Activated naive CD4-positive, alpha-beta T cell treated with anti-CD3 and anti-CD28 coated beads for 36 hours (primary cell): ENCODE measurements at regions of chrX and their contacts with region 1.

Region 1: DNA sequence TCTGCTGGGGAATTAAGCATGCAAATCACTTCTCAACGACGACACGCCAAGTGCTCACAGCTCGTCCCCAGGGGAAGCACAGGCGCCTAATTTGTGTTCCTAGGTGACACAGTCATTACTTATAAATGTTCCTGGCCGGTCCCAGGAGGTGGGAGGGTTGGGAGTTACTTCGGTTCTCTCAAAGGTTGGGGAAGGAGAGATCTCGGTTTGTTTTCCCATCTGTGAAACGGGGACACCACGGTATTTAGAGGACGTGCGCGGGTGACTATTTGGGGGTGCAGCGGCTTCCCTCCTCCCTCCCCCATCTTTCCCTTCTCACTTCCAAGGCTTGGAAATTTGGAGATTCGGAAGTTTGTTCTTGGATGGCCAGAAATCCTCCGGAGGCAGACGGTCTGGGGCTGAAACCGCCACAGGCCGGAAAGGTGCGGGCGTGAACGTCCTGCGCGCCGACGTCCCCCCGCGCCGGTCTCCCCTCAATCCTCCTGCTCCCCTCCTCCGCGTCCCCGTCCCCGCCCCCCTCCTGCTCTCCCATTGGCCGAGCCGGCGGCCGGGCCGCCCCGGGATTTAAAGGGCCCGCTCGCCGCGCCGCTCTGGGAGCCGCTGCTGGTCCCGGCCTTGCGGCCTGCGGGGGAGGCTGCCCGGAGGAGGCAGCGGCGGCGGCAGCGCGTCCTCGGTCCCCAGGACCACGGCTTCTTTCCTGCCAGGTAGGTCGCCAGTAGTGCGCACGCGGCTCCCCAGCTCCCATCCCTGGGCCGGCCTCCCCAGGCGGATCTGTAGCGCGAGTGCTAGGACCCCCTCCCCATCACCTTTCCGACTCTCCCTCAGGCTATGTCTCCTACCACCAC is at the start of gene PORCN:
- DNase-seq: peak; percentile 77
- H3K4me3 Mint-ChIP-seq: peak within 1 kb of the TSS; percentile 78
- H3K27ac Mint-ChIP-seq: peak within 1 kb of the TSS; percentile 66
- H3K4me1 Mint-ChIP-seq: peaks cover 13% of the 10 kb centered on the region
- H3K27me3 Mint-ChIP-seq: no peaks in the 10 kb centered on the region
- total RNA-seq, gene PORCN: 5.2 to 5.6 TPM

Region 2: DNA sequence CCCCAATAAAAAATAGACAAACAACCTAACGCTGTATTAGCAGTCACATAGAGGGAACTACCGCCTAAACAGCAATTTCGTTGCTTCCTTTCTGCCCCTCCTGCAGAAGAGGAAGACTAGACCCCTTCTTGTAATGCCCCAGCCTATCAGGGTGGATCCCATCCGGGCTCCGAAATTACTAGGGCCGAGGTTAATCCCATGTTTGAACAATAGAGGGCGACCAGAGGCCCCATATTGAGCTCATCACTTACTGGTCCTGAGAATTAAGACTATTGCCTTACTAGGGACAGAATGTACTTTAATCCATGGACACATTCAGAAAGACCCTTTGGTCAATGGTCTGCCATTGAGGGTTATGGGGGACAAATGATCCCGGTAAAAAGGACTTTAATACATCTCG is 425.4 kb before region 1 on chrX:
- CTCF ChIA-PET with region 1: no interaction called
- intact Hi-C with region 1: loop called (anchors 5 kb)
- DNase-seq: peak; percentile 68
- H3K4me3 Mint-ChIP-seq: no peak overlapping the region
- H3K27ac Mint-ChIP-seq: no peak overlapping the region
- H3K4me1 Mint-ChIP-seq: no peaks in the 10 kb centered on the region
- H3K27me3 Mint-ChIP-seq: no peaks in the 10 kb centered on the region

Region 3: GRCh38 chrX:48475774-48476577 is 32.6 kb before region 1 on chrX and contains the start of gene FTSJ1:
- CTCF ChIA-PET with region 1: no interaction called
- intact Hi-C with region 1: loop called (anchors 1 kb)
- DNase-seq: peak; percentile 86
- H3K4me3 Mint-ChIP-seq: peak within 1 kb of the TSS; percentile 76
- H3K27ac Mint-ChIP-seq: peak within 1 kb of the TSS; percentile 90
- H3K4me1 Mint-ChIP-seq: peaks cover 32% of the 10 kb centered on the region
- H3K27me3 Mint-ChIP-seq: no peaks in the 10 kb centered on the region
- total RNA-seq, gene FTSJ1: 66.2 to 66.8 TPM

Region 4: GRCh38 chrX:48521353-48522243 is 13.0 kb after region 1 on chrX and contains the start of gene EBP:
- CTCF ChIA-PET with region 1: no interaction called
- intact Hi-C with region 1: loop called (anchors 1 kb)
- DNase-seq: peak; percentile 98
- H3K4me3 Mint-ChIP-seq: peak within 1 kb of the TSS; percentile 90
- H3K27ac Mint-ChIP-seq: peak within 1 kb of the TSS; percentile 98
- H3K4me1 Mint-ChIP-seq: peaks cover 25% of the 10 kb centered on the region
- H3K27me3 Mint-ChIP-seq: no peaks in the 10 kb centered on the region
- total RNA-seq, gene EBP: 118 to 123 TPM

Region 5: GRCh38 chrX:48539345-48540027 is 30.9 kb after region 1 on chrX and contains the start of gene TBC1D25:
- CTCF ChIA-PET with region 1: no interaction called
- intact Hi-C with region 1: loop called (anchors 1 kb)
- DNase-seq: peak; percentile 98
- H3K4me3 Mint-ChIP-seq: peak within 1 kb of the TSS; percentile 88
- H3K27ac Mint-ChIP-seq: peak within 1 kb of the TSS; percentile 93
- H3K4me1 Mint-ChIP-seq: peaks cover 12% of the 10 kb centered on the region
- H3K27me3 Mint-ChIP-seq: no peaks in the 10 kb centered on the region
- total RNA-seq, gene TBC1D25: 10.6 to 11.1 TPM

Region 6: GRCh38 chrX:48589482-48590162 is 81.0 kb after region 1 on chrX:
- CTCF ChIA-PET with region 1: no interaction called
- intact Hi-C with region 1: no loop called
- DNase-seq: no peak
- H3K4me3 Mint-ChIP-seq: no peak overlapping the region
- H3K27ac Mint-ChIP-seq: no peak overlapping the region
- H3K4me1 Mint-ChIP-seq: no peaks in the 10 kb centered on the region
- H3K27me3 Mint-ChIP-seq: no peaks in the 10 kb centered on the region